ENCODE measurements at regions of chr22 and their contacts with region 1.

Region 1: GRCh38 chr22:50326959-50327710 is at the start of gene DENND6B:
- DNase-seq: peak; percentile 58 to 73 (median 64)
- H3K4me3 ChIP-seq: peak within 1 kb of the TSS; percentile 53
- H3K4me3 Mint-ChIP-seq: peak within 1 kb of the TSS; percentile 78 to 91 (median 84)
- H3K27ac ChIP-seq: peak within 1 kb of the TSS; percentile 61
- H3K27ac Mint-ChIP-seq: peak within 1 kb of the TSS; percentile 37 to 95 (median 70)
- H3K4me1 ChIP-seq: peaks cover 7% of the 10 kb centered on the region
- H3K4me1 Mint-ChIP-seq: peaks cover 4 to 13% (median 13%) of the 10 kb centered on the region in 3 donors
- H3K27me3 ChIP-seq: no peaks in the 10 kb centered on the region
- H3K27me3 Mint-ChIP-seq: peaks cover 3 to 6% of the 10 kb centered on the region in 2 donors
- total RNA-seq, gene DENND6B: 3.9 to 4.3 TPM

Region 2: GRCh38 chr22:50271519-50271970 is 55.6 kb before region 1 on chr22:
- CTCF ChIA-PET with region 1: interaction called, 25 read pairs
- POLR2A ChIA-PET with region 1: no interaction called
- DNase-seq: peak; percentile 25 to 69 (median 38)
- H3K4me3 ChIP-seq: peak overlapping the region; percentile 59
- H3K4me3 Mint-ChIP-seq: no peak overlapping the region
- H3K27ac ChIP-seq: no peak overlapping the region
- H3K27ac Mint-ChIP-seq: no peak overlapping the region
- H3K4me1 ChIP-seq: peaks cover 18% of the 10 kb centered on the region
- H3K4me1 Mint-ChIP-seq: peaks cover 3 to 26% (median 6%) of the 10 kb centered on the region in 3 donors
- H3K27me3 ChIP-seq: no peaks in the 10 kb centered on the region
- H3K27me3 Mint-ChIP-seq: peaks cover 3 to 7% of the 10 kb centered on the region in 2 donors